ENCODE measurements at regions of chr4 and their contacts with region 1.

Region 1: DNA sequence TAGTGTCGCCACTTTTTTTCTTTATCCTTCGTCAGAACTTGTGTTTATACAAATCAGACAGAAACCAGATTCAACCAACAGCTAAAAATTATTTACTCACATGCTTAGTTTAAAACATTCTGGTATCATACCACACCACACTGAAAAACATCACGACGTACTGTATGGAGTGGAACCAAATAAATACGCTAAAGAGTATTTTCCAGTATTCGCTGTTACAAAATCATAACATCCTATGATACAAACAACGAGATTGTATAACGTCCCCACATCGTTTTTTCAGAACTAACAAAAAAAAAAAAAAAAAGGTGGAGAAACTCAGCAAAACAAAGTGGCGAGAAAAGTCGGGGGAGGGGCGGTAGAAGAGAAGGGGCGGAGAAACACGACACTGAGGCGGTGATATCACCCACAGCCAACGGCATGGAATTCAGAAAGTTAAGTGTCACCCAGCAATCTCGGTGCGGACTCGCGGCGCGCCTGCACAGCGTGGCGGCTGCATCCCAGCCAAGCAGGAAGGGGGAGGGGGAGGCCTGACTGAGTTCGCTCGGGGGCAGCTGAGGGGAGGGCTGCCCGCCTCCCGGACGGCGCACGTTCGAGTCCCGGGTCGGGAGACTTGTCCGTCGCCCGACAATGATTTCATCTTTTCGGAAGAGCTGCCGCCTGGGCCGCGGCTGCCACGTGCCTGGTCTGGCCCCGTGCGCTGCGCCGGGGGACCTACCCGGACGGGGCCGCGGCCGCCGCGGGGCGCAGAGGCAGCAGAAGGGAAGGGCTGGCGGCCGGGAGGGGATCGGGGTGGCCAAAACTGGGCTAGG is 920 bp downstream of the SETD7 start:
- DNase-seq: peak; percentile 83 to 94 (median 91)
- H3K4me3 ChIP-seq: peak overlapping the region; percentile 63 to 76
- H3K4me3 Mint-ChIP-seq: peak overlapping the region; percentile 92 to 99 (median 97)
- H3K27ac ChIP-seq: peak overlapping the region; percentile 91
- H3K27ac Mint-ChIP-seq: peak overlapping the region; percentile 96 to 100 (median 98)
- H3K4me1 ChIP-seq: peaks cover 41% of the 10 kb centered on the region
- H3K4me1 Mint-ChIP-seq: peaks cover 29 to 82% (median 59%) of the 10 kb centered on the region in 4 donors
- H3K27me3 ChIP-seq: no peaks in the 10 kb centered on the region
- H3K27me3 Mint-ChIP-seq: peaks cover 0 to 1% of the 10 kb centered on the region in 2 donors

Region 2: DNA sequence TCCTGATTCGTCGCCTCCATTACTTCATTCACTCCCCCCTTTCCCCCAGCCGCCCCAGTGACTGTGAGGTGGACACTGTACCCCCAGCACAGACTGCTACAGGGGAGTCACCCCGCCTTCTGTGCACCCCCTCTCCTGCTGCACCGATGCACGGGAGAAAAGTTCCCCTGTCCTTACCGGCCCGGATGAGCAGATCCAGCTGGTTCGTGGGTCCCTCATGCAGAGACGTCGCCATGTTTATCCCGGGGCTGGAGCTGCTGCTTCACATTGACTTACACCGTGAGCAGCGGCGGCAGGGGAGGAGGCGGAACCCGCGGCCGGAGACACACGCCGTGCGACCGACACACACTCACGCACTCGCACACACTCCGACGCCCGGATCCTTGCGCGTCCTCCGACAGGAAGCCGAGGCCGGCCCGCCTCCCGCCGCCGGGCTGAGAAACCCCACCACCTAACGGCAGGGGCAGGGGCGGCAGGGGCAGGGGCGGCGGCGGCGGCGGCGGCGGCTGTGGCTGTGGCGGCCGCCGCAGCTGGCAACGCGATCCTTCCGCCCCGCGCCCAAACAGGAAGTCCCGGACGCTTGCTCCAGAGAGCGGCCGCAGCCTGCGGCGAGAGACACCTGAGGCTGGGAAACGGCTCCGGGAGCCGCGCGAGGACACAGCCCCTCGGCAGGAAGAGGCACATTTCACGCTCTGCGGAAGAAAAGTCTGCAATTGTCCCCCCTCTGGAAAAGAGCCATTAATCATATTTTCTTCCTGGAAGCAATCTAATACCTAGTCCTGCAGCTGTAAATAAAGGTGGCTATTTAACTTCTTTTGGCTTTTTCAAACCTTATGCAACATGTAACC is 470.9 kb before region 1 on chr4:
- CTCF ChIA-PET with region 1: no interaction called
- POLR2A ChIA-PET with region 1: interaction called, 7 read pairs
- intact Hi-C with region 1: loop called (anchors 2 kb)
- DNase-seq: peak; percentile 84 to 89 (median 85)
- H3K4me3 ChIP-seq: peak overlapping the region; percentile 73 to 99
- H3K4me3 Mint-ChIP-seq: peak overlapping the region; percentile 89 to 100 (median 92)
- H3K27ac ChIP-seq: peak overlapping the region; percentile 96
- H3K27ac Mint-ChIP-seq: peak overlapping the region; percentile 91 to 97 (median 94)
- H3K4me1 ChIP-seq: peaks cover 37% of the 10 kb centered on the region
- H3K4me1 Mint-ChIP-seq: peaks cover 26 to 52% (median 36%) of the 10 kb centered on the region in 4 donors
- H3K27me3 ChIP-seq: no peaks in the 10 kb centered on the region
- H3K27me3 Mint-ChIP-seq: no peaks in the 10 kb centered on the region

Region 3: GRCh38 chr4:139301113-139301820 is 253.8 kb before region 1 on chr4 and contains the start of gene NAA15:
- CTCF ChIA-PET with region 1: no interaction called
- POLR2A ChIA-PET with region 1: interaction called, 38 read pairs
- intact Hi-C with region 1: loop called (anchors 2 kb)
- DNase-seq: peak; percentile 97 to 99 (median 97)
- H3K4me3 ChIP-seq: peak within 1 kb of the TSS; percentile 69 to 94
- H3K4me3 Mint-ChIP-seq: peak within 1 kb of the TSS; percentile 96 to 100 (median 99)
- H3K27ac ChIP-seq: peak within 1 kb of the TSS; percentile 98
- H3K27ac Mint-ChIP-seq: peak within 1 kb of the TSS; percentile 94 to 100 (median 99)
- H3K4me1 ChIP-seq: peaks cover 56% of the 10 kb centered on the region
- H3K4me1 Mint-ChIP-seq: peaks cover 22 to 73% (median 43%) of the 10 kb centered on the region in 4 donors
- H3K27me3 ChIP-seq: no peaks in the 10 kb centered on the region
- H3K27me3 Mint-ChIP-seq: no peaks in the 10 kb centered on the region
- total RNA-seq, gene NAA15: 45.8 to 46.5 TPM

Region 4: GRCh38 chr4:139392797-139393196 is 162.3 kb before region 1 on chr4:
- CTCF ChIA-PET with region 1: no interaction called
- POLR2A ChIA-PET with region 1: no interaction called
- intact Hi-C with region 1: no loop called
- DNase-seq: no peak
- H3K4me3 ChIP-seq: no peak overlapping the region
- H3K4me3 Mint-ChIP-seq: no peak overlapping the region
- H3K27ac ChIP-seq: no peak overlapping the region
- H3K27ac Mint-ChIP-seq: no peak overlapping the region
- H3K4me1 ChIP-seq: no peaks in the 10 kb centered on the region
- H3K4me1 Mint-ChIP-seq: peaks cover 0 to 3% (median under 1%) of the 10 kb centered on the region in 4 donors
- H3K27me3 ChIP-seq: no peaks in the 10 kb centered on the region
- H3K27me3 Mint-ChIP-seq: no peaks in the 10 kb centered on the region

Region 5: DNA sequence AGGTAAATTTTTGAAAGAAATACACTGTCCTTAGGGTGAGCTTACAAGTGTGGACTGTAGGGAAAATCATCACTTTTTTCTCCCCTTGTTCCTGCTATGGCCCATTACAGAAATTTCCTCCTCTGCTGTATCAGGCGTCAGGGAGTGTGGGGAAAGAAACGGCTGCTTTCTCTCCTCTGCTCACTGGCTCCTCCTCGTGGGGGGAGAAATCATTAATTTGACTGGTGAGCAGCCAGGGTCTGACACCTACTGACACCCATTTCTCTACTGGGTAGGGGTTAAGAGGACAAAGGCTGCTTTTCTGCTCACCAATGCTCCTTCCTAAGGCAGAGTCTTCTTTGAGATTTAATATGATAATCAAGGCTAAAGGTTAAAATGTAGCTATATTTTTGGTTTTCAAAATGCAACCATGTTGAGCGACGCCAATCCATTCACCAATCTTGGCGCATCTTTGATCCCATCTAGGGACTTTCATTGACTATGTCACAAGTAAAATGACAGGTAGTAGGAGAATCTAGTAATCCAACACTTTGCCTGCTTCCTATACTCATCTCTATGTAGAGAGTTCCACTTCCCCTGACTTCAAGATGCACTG is 24.2 kb before region 1 on chr4:
- CTCF ChIA-PET with region 1: interaction called, 21 read pairs
- POLR2A ChIA-PET with region 1: interaction called, 13 read pairs
- intact Hi-C with region 1: loop called (anchors 2 kb)
- DNase-seq: peak; percentile 41 to 62 (median 57)
- H3K4me3 ChIP-seq: no peak overlapping the region
- H3K4me3 Mint-ChIP-seq: peak overlapping the region in 1 of 8 donors; percentile 27
- H3K27ac ChIP-seq: no peak overlapping the region
- H3K27ac Mint-ChIP-seq: peak overlapping the region in 4 of 7 donors; percentile 24 to 81 (median 61)
- H3K4me1 ChIP-seq: peaks cover 8% of the 10 kb centered on the region
- H3K4me1 Mint-ChIP-seq: peaks cover 8 to 17% (median 14%) of the 10 kb centered on the region in 4 donors
- H3K27me3 ChIP-seq: no peaks in the 10 kb centered on the region
- H3K27me3 Mint-ChIP-seq: no peaks in the 10 kb centered on the region

Region 6: DNA sequence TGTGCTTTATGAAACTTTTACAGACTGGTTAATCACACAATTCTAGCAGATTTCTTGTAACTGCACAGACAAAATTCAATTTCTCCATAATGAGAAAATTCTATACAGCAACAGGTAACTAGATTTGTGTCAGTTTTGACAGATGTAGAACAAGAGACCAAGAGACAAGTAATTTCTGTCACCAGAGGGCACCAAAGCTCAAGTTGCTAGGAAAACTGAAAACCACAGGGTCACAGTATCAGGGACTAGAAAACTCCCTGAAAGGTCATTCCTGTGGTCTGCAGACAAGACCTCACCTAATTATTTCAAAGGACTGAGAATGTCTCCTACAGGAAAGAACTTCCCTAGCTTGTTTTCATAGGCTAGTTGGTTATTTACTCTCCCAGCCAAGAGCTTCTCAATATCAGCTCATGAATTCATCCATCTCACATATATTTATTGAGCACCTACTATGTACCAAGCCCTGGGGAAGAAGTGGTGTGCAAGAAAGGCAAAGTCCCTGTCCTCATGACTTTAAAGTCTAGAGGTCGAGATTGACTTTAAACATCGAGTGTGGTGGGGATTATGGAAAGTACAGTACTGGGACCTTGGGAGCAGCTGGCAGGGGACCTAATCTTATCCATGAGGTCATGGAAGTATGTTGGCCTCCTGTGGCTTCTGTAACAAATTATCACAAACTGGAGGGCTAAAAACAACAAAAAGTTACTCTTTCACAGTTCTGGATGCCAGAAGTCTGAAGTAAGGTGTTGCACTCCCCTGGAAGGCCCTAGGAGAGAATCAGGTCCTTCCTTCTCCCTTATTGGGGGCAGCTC is 48.7 kb after region 1 on chr4:
- CTCF ChIA-PET with region 1: interaction called, 11 read pairs
- POLR2A ChIA-PET with region 1: interaction called, 12 read pairs
- intact Hi-C with region 1: loop called (anchors 2 kb)
- DNase-seq: peak in 4 of 5 donors; percentile 22 to 36 (median 34)
- H3K4me3 ChIP-seq: no peak overlapping the region
- H3K4me3 Mint-ChIP-seq: no peak overlapping the region
- H3K27ac ChIP-seq: no peak overlapping the region
- H3K27ac Mint-ChIP-seq: no peak overlapping the region
- H3K4me1 ChIP-seq: peaks cover 4% of the 10 kb centered on the region
- H3K4me1 Mint-ChIP-seq: peaks cover 13 to 15% (median 14%) of the 10 kb centered on the region in 4 donors
- H3K27me3 ChIP-seq: no peaks in the 10 kb centered on the region
- H3K27me3 Mint-ChIP-seq: peaks cover 4 to 6% of the 10 kb centered on the region in 2 donors

Region 7: GRCh38 chr4:139656614-139657486 is 101.8 kb after region 1 on chr4:
- CTCF ChIA-PET with region 1: interaction called, 12 read pairs
- POLR2A ChIA-PET with region 1: interaction called, 22 read pairs
- intact Hi-C with region 1: no loop called
- DNase-seq: peak; percentile 59 to 65 (median 62)
- H3K4me3 ChIP-seq: no peak overlapping the region
- H3K4me3 Mint-ChIP-seq: peak overlapping the region in 6 of 8 donors; percentile 23 to 75 (median 72)
- H3K27ac ChIP-seq: no peak overlapping the region
- H3K27ac Mint-ChIP-seq: peak overlapping the region in 6 of 7 donors; percentile 13 to 88 (median 68)
- H3K4me1 ChIP-seq: peaks cover 18% of the 10 kb centered on the region
- H3K4me1 Mint-ChIP-seq: peaks cover 15 to 26% (median 20%) of the 10 kb centered on the region in 4 donors
- H3K27me3 ChIP-seq: no peaks in the 10 kb centered on the region
- H3K27me3 Mint-ChIP-seq: peaks cover 0 to 2% of the 10 kb centered on the region in 2 donors

Region 8: GRCh38 chr4:140018931-140019618 is 464.0 kb after region 1 on chr4:
- CTCF ChIA-PET with region 1: no interaction called
- POLR2A ChIA-PET with region 1: no interaction called
- intact Hi-C with region 1: no loop called
- DNase-seq: no peak
- H3K4me3 ChIP-seq: no peak overlapping the region
- H3K4me3 Mint-ChIP-seq: no peak overlapping the region
- H3K27ac ChIP-seq: no peak overlapping the region
- H3K27ac Mint-ChIP-seq: no peak overlapping the region
- H3K4me1 ChIP-seq: no peaks in the 10 kb centered on the region
- H3K4me1 Mint-ChIP-seq: no peaks in the 10 kb centered on the region
- H3K27me3 ChIP-seq: no peaks in the 10 kb centered on the region
- H3K27me3 Mint-ChIP-seq: peaks cover under 1 to 3% of the 10 kb centered on the region in 2 donors